Activated CD8-positive, alpha-beta memory T cell treated with anti-CD3 and anti-CD28 coated beads, Interleukin-2, amount 10 ng/mL, durations not matched to agents 7 days and 5 days (primary cell): ENCODE measurements at regions of chr9 and their contacts with region 1.

Region 1: DNA sequence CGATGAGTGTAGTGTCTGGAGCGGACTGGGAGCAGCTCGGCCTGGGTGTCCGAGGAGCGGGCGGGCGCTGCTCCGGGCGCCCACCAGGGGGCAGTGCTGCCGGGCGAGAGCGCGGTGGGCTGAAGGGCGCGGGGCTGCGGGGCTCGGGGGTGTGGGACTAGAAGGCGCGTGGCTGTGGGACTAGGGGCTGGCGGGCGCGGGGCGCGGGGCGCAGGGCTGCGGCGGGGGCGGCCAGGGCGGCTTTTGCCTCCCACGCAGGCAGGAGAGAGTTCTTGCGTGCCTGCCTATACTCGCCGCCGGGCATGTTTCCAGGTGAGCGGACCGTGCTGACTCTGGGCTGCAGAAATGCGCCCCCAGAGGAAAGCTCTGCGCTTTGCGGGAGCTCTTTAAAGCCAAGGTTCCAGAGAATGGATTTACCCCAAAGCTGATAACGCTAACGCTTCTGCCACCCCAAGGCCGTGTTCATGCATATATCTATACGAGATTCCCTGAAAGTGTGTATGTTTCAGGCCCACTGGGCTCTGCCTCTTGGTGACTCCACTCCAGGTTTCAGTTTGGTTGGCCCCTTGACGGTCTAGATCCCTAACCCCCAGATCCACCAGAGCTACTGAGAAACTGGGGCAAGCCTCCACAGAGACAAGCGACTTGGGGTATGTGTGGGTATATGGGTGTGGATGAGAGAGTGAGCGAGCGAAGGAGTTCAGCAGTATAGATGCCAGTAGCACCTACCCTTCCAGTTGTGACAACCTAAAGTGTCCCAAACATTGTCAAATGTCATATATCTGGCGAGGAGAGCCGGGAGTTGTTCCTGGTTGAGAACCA is 56.2 kb downstream of the ACER2 start:
- DNase-seq: peak; percentile 76
- ATAC-seq: peak; percentile 96
- H3K4me3 Mint-ChIP-seq: peak overlapping the region; percentile 74
- H3K27ac Mint-ChIP-seq: no peak overlapping the region
- H3K4me1 Mint-ChIP-seq: peaks cover 11% of the 10 kb centered on the region
- H3K27me3 Mint-ChIP-seq: no peaks in the 10 kb centered on the region

Region 2: DNA sequence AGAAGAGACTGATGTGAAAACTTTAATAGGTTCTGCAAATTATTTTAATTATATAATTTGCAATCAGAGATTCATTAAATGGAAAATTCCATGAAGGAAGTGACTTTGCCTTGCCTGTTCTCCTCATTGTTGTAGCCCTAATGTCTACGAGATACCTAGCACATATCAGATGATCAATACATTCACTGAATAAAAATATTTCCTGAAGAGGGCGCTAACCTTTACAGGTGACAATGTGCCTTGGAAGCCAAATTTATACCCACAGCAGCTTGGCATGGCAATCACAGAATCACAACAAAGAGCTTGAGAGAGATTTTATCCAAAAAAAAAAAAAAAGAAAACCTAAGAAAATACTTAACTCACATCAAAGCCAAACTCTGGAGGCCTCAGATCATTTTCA is 379.7 kb before region 1 on chr9:
- CTCF ChIA-PET with region 1: interaction called, 12 read pairs
- DNase-seq: no peak
- ATAC-seq: peak; percentile 47
- H3K4me3 Mint-ChIP-seq: no peak overlapping the region
- H3K27ac Mint-ChIP-seq: peak overlapping the region; percentile 2
- H3K4me1 Mint-ChIP-seq: no peaks in the 10 kb centered on the region
- H3K27me3 Mint-ChIP-seq: no peaks in the 10 kb centered on the region

Region 3: GRCh38 chr9:19184144-19184917 is 280.6 kb before region 1 on chr9:
- CTCF ChIA-PET with region 1: interaction called, 11 read pairs
- DNase-seq: peak; percentile 93
- ATAC-seq: peak; percentile 100
- H3K4me3 Mint-ChIP-seq: peak overlapping the region; percentile 57
- H3K27ac Mint-ChIP-seq: peak overlapping the region; percentile 97
- H3K4me1 Mint-ChIP-seq: peaks cover 27% of the 10 kb centered on the region
- H3K27me3 Mint-ChIP-seq: no peaks in the 10 kb centered on the region

Region 4: GRCh38 chr9:19441730-19442129 is 23.2 kb before region 1 on chr9:
- CTCF ChIA-PET with region 1: interaction called, 37 read pairs
- DNase-seq: no peak
- ATAC-seq: peak; percentile 86
- H3K4me3 Mint-ChIP-seq: peak overlapping the region; percentile 71
- H3K27ac Mint-ChIP-seq: peak overlapping the region; percentile 79
- H3K4me1 Mint-ChIP-seq: peaks cover 17% of the 10 kb centered on the region
- H3K27me3 Mint-ChIP-seq: no peaks in the 10 kb centered on the region

Region 5: DNA sequence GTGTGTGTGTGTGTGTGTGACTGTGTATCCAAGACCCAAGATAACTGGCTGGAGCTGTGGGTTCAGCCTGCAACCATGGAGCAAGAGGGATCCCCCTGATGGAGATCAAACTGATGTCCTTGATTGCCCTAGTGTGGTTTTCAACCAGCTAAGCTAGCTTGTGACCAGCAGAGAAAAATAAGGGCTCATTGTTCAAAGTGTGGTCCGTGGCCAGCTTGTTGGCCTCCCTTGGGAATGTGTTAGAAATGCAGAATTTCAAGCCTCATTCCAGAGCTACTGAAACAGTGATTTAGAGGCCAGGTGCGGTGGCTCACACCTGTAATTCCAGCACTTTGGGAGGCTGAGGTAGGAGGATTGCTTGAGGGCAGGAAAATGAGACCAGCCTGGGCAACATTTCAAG is 23.7 kb after region 1 on chr9:
- CTCF ChIA-PET with region 1: interaction called, 10 read pairs
- DNase-seq: no peak
- ATAC-seq: no peak
- H3K4me3 Mint-ChIP-seq: no peak overlapping the region
- H3K27ac Mint-ChIP-seq: no peak overlapping the region
- H3K4me1 Mint-ChIP-seq: peaks cover 8% of the 10 kb centered on the region
- H3K27me3 Mint-ChIP-seq: peaks cover 17% of the 10 kb centered on the region